AG04449 (cell line): ENCODE measurements at regions of chr5 and their contacts with region 1.

Region 1: DNA sequence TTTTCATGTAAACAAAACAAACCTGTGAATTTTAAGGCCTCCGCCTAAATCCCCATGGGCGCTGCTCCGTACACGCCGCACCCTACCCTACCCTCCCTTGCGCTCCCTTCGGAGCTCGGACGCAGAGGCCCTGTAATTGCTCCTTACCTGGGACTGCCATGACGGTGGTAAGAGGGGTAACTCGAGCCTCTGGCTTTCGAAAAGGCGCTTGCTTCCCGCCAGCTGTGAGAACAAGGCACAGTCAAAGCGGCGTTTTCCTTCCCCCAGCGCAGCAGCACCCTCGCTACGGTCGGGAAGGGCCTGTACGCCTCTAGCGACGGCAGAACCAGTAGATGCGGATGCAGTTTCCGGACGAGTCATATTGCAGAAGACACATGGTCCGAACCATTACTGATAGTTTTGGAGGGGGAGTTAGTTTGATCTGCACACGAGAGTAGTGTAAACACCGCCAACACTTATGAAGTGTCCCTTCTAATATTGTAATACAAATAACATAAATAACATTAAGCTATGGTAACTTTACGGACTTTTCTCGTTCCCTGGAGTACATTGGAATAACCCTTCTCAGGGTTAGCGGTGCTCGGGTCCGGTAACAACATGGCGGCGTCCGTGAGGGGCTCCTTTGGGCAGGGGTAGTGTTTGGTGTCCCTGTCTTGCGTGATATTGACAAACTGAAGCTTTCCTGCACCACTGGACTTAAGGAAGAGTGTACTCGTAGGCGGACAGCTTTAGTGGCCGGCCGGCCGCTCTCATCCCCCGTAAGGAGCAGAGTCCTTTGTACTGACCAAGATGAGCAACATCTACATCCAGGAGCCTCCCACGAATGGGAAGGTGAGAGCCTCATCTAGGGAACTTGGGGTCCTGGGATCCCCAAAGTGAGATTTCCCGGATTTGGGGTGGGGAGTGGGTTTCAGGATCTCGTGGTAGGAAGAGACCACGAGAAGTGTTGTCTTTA is at the starts of genes CWC27 and SREK1IP1:
- DNase-seq: peak; percentile 51
- H3K4me3 ChIP-seq: peak within 1 kb of the TSS; percentile 92
- CTCF ChIP-seq: peak; percentile 11

Region 2: GRCh38 chr5:64507264-64507605 is 261.4 kb before region 1 on chr5:
- CTCF ChIA-PET with region 1: no interaction called
- POLR2A ChIA-PET with region 1: no interaction called
- DNase-seq: no peak
- H3K4me3 ChIP-seq: no peak overlapping the region
- CTCF ChIP-seq: no peak

Region 3: GRCh38 chr5:64784451-64785025 is 15.9 kb after region 1 on chr5:
- CTCF ChIA-PET with region 1: interaction called, 96 read pairs
- POLR2A ChIA-PET with region 1: no interaction called
- DNase-seq: peak; percentile 49
- H3K4me3 ChIP-seq: no peak overlapping the region
- CTCF ChIP-seq: peak; percentile 65

Region 4: GRCh38 chr5:64987768-64988167 is 219.1 kb after region 1 on chr5:
- CTCF ChIA-PET with region 1: no interaction called
- POLR2A ChIA-PET with region 1: no interaction called
- DNase-seq: no peak
- H3K4me3 ChIP-seq: no peak overlapping the region
- CTCF ChIP-seq: no peak